ENCODE measurements at regions of chr10 and their contacts with region 1.

Region 1: GRCh38 chr10:126060261-126060981 is 164.1 kb downstream of the FANK1 start:
- DNase-seq: no peak
- ATAC-seq: no peak
- H3K4me3 ChIP-seq: no peak overlapping the region
- H3K4me3 Mint-ChIP-seq: no peak overlapping the region
- H3K27ac ChIP-seq: no peak overlapping the region
- H3K27ac Mint-ChIP-seq: no peak overlapping the region
- H3K4me1 ChIP-seq: no peaks in the 10 kb centered on the region
- H3K4me1 Mint-ChIP-seq: no peaks in the 10 kb centered on the region
- H3K27me3 ChIP-seq: no peaks in the 10 kb centered on the region
- H3K27me3 Mint-ChIP-seq: peaks cover 12 to 16% of the 10 kb centered on the region in 2 donors
- CTCF ChIP-seq: no peak

Region 2: DNA sequence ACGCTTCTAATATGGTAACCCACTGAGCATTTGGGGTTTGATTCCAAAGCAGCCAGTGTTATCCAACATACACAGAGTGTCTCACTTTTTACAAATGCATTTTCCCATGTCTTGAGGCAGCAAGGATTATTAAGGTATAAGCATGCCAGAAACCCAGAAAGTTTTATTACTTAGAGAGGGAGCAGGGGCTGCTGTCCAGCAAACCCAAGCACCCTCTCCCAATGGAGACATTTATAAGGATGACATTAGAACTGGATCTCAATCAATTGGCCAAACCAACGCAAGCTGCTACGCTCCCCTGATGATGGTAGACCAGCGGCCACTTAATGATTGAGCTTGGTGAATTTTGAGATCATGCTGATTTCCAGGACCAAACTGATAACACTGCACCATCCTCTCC is 12.2 kb after region 1 on chr10:
- intact Hi-C with region 1: loop called (anchors 1 kb)
- DNase-seq: no peak
- ATAC-seq: no peak
- H3K4me3 ChIP-seq: no peak overlapping the region
- H3K4me3 Mint-ChIP-seq: no peak overlapping the region
- H3K27ac ChIP-seq: no peak overlapping the region
- H3K27ac Mint-ChIP-seq: no peak overlapping the region
- H3K4me1 ChIP-seq: no peaks in the 10 kb centered on the region
- H3K4me1 Mint-ChIP-seq: peaks cover 0 to 4% of the 10 kb centered on the region in 2 donors
- H3K27me3 ChIP-seq: no peaks in the 10 kb centered on the region
- H3K27me3 Mint-ChIP-seq: peaks cover 20 to 33% of the 10 kb centered on the region in 2 donors
- CTCF ChIP-seq: no peak

Region 3: DNA sequence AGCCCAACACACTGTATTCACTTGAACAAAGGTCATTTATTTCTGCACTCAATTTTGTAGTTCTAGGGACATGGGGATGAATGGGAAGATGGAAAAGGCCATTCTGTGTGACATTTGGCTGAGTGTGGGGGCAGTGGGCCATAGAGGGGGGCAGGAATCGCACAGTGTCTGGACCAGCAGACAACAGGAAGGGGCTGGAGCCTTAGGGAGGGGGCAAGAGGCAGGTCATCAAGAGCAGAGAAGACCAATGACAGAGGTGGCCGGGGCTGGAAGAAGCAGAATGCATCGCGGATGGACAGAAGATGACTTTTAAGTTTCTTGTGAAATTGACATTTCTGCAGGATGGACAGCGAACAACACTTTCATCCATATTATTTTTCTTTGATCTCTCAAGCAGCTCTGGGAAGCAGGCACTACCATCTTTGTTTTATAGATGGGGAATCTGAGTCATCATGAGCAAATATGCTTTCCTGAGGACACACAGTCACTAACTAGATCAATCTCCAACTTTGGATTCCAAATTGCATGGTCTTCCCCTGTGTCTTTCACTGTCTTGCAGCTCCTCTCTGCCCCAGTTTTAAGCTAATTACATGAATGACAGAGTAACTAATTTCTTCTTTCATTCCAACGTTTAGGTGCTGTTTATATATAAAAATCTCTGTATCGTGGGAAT is 126.2 kb after region 1 on chr10:
- intact Hi-C with region 1: no loop called
- DNase-seq: no peak
- ATAC-seq: no peak
- H3K4me3 ChIP-seq: no peak overlapping the region
- H3K4me3 Mint-ChIP-seq: no peak overlapping the region
- H3K27ac ChIP-seq: no peak overlapping the region
- H3K27ac Mint-ChIP-seq: no peak overlapping the region
- H3K4me1 ChIP-seq: no peaks in the 10 kb centered on the region
- H3K4me1 Mint-ChIP-seq: no peaks in the 10 kb centered on the region
- H3K27me3 ChIP-seq: no peaks in the 10 kb centered on the region
- H3K27me3 Mint-ChIP-seq: peaks cover 10 to 14% of the 10 kb centered on the region in 2 donors
- CTCF ChIP-seq: no peak